ENCODE measurements at regions of chr7 and their contacts with region 1.

Region 1: GRCh38 chr7:45885264-45885882 is 2.9 kb upstream of the IGFBP1 start:
- DNase-seq: no peak
- H3K4me3 ChIP-seq: no peak overlapping the region
- H3K27ac ChIP-seq: no peak overlapping the region
- H3K4me1 ChIP-seq: peaks cover 3 to 15% (median 10%) of the 10 kb centered on the region in 4 experiments
- H3K27me3 ChIP-seq: peaks cover 21 to 36% (median 33%) of the 10 kb centered on the region in 4 experiments
- CTCF ChIP-seq: no peak
- EP300 ChIP-seq: no peak
- POLR2A ChIP-seq: no peak
- RAD21 ChIP-seq: no peak

Region 2: GRCh38 chr7:45872116-45873034 is 13.0 kb before region 1 on chr7:
- CTCF ChIA-PET with region 1: interaction called, 12 read pairs
- POLR2A ChIA-PET with region 1: no interaction called
- DNase-seq: peak in 1 of 2 experiments; percentile 69
- H3K4me3 ChIP-seq: no peak overlapping the region
- H3K27ac ChIP-seq: no peak overlapping the region
- H3K4me1 ChIP-seq: no peaks in the 10 kb centered on the region; a peak in 1 of 7 replicates
- H3K27me3 ChIP-seq: no peaks in the 10 kb centered on the region
- CTCF ChIP-seq: peak; percentile 78 to 88 (median 83)
- EP300 ChIP-seq: no peak
- POLR2A ChIP-seq: no peak
- RAD21 ChIP-seq: peak; percentile 53 to 70

Measured in H1 (cell line).